Activated naive CD4-positive, alpha-beta T cell treated with anti-CD3 and anti-CD28 coated beads for 36 hours (primary cell): ENCODE measurements at regions of chr4 and their contacts with region 1.

Region 1: DNA sequence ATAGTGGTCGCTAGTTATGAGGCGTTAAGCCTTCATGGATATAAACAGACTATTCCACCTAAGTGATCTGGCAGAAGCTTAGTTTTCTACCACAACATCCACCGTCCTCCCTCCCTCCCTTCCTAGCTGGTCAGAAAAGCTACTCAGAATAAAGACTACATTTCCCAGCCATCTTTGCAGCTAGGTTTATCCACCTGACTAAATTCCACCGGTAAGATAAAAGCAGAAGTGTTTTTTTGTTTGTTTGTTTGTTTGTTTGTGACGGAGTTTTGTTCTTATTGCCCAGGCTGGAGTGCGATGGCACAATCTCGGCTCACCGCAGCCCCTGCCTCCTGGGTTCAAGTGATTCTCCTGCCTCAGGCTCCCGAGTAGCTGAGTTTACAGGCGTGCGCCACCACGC is 44.3 kb downstream of the HELT start:
- DNase-seq: no peak
- H3K4me3 Mint-ChIP-seq: no peak overlapping the region
- H3K27ac Mint-ChIP-seq: no peak overlapping the region
- H3K4me1 Mint-ChIP-seq: no peaks in the 10 kb centered on the region
- H3K27me3 Mint-ChIP-seq: peaks cover 2% of the 10 kb centered on the region

Region 2: GRCh38 chr4:186775902-186776301 is 1713.3 kb after region 1 on chr4:
- CTCF ChIA-PET with region 1: no interaction called
- intact Hi-C with region 1: loop called (anchors 5 kb)
- DNase-seq: no peak
- H3K4me3 Mint-ChIP-seq: no peak overlapping the region
- H3K27ac Mint-ChIP-seq: no peak overlapping the region
- H3K4me1 Mint-ChIP-seq: no peaks in the 10 kb centered on the region
- H3K27me3 Mint-ChIP-seq: no peaks in the 10 kb centered on the region